ENCODE measurements at regions of chr2 and their contacts with region 1.

Region 1: DNA sequence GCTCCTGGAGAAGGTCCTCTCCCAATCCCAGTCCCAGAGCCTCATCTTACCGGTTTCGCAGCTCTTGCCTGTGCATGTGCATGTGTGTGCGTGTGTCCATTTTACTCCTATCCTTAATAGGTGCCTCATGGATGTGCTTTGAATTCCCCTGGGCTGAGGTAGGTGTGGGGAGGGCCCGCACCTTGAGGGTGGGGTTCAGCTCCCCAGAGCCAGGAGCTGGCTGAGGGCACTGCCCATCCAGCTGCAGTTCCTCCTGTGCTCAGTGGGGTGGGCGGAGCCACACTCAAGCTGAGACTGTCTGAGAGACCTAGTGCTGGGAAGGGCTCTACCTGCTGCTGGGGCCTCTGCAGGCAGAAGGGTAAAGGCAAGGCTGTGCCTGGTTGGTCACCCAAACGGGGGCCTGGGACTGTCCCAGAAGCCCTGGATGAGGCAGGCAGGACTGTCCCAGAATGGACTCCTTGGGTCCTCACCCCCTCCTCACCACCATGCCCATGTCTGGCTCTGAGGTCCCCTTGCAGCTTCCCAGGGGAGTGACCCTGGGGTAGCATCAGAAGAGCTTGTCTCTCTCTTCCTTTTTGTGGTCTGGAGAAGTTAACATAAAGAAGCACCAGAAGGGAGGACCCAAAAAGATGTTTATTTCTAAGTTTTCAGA is 8.9 kb downstream of the GDF7 start:
- DNase-seq: peak; percentile 36

Region 2: DNA sequence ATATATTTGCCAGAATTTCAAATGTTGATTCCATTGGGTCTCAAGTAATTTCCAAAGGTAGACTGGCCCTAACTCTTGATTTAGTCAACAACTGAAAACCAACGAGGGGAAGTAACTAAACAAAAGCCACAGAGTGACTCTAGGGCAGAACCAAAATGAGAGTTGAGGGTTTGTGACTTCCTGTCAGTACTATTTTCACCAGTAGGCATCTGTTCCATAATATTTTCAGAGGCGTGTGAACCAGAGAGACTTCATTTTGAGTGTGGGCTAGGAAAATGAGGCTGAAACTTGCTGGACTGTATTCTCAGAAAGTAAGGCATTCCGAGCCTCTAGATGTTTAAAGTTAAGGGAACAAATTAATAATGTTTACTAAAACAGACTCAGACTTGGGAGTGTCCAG is 61.7 kb after region 1 on chr2:
- in situ Hi-C with region 1: loop called (anchors 10 kb)
- DNase-seq: no peak

Region 3: GRCh38 chr2:20925265-20925889 is 249.6 kb after region 1 on chr2:
- in situ Hi-C with region 1: loop called (anchors 25 kb)
- DNase-seq: no peak